Activated CD4-positive, alpha-beta T cell treated with anti-CD3 and anti-CD28 coated beads, Interleukin-2, amount 10 ng/mL, durations not matched to agents 24 days and 14 days (primary cell): ENCODE measurements at regions of chr13 and their contacts with region 1.

Region 1: GRCh38 chr13:85806553-85807175 is 7.4 kb upstream of the SLITRK6 start:
- DNase-seq: no peak
- H3K4me3 Mint-ChIP-seq: no peak overlapping the region
- H3K27ac Mint-ChIP-seq: no peak overlapping the region
- H3K4me1 Mint-ChIP-seq: no peaks in the 10 kb centered on the region
- H3K27me3 Mint-ChIP-seq: no peaks in the 10 kb centered on the region

Region 2: DNA sequence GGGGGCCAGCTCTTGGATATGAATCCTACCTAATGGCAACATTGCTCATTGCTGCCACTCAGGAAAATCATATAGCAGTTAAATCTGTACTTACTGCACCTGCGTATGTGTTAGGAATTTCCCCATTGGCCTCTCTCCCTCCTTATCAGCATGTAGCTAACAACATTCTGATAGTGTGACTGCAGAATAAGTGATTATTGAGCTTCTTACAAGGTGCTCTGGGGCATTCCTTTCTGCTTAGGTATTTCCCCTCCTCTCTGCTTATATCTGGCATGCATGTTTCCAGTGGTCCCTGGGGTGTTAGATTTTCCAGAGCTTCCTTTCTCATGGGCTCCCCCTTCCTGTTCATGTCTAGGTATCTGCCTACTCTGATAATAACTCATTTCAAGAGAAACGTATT is 1510.3 kb before region 1 on chr13:
- intact Hi-C with region 1: no loop called
- DNase-seq: no peak
- H3K4me3 Mint-ChIP-seq: no peak overlapping the region
- H3K27ac Mint-ChIP-seq: no peak overlapping the region
- H3K4me1 Mint-ChIP-seq: no peaks in the 10 kb centered on the region
- H3K27me3 Mint-ChIP-seq: no peaks in the 10 kb centered on the region

Region 3: GRCh38 chr13:84896128-84896527 is 910.5 kb before region 1 on chr13:
- intact Hi-C with region 1: loop called (anchors 1 kb)
- DNase-seq: peak; percentile 74
- H3K4me3 Mint-ChIP-seq: no peak overlapping the region
- H3K27ac Mint-ChIP-seq: no peak overlapping the region
- H3K4me1 Mint-ChIP-seq: no peaks in the 10 kb centered on the region
- H3K27me3 Mint-ChIP-seq: no peaks in the 10 kb centered on the region

Region 4: GRCh38 chr13:84917252-84917878 is 889.3 kb before region 1 on chr13:
- intact Hi-C with region 1: loop called (anchors 5 kb)
- DNase-seq: no peak
- H3K4me3 Mint-ChIP-seq: no peak overlapping the region
- H3K27ac Mint-ChIP-seq: no peak overlapping the region
- H3K4me1 Mint-ChIP-seq: no peaks in the 10 kb centered on the region
- H3K27me3 Mint-ChIP-seq: no peaks in the 10 kb centered on the region

Region 5: DNA sequence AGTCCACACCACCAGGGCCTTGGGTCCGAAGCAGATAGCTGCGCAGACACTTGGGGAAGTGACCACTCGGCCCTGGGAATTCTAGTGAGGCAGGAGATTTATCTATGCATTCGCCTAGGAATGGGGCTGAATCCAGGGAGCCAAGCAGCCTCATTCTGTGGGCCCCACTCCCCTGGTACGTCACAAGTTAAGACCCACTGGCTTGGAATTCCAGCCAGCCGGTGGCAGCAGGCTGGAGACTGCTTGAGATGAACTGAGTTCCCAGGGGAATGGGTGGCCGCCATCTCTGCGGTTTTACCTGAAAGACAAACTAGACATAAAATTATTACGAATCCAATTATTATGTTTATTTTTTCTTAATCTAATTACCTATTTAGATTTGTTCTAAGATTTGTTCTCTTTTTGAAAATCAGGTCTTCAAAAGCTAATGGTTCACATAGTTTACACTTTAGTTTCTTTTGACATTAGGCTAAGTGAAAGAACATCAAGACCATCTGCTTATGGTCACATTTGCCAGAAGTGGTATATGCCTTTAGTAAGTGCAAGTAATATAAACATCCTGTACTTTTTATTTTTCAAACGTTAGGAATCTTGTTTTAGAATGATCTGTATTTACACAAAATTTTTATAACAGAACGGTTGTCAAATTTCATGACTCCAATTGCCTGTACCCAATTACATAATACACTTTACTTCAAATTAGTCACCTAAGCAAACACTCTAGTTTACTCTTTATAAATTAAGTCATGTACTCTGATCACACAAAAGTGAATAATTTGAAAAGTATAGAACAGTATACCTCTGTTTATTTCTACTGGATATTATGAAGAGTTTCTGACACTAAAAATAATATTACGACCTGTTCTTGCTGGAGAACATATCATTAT is 81.9 kb before region 1 on chr13:
- intact Hi-C with region 1: no loop called
- DNase-seq: no peak
- H3K4me3 Mint-ChIP-seq: no peak overlapping the region
- H3K27ac Mint-ChIP-seq: no peak overlapping the region
- H3K4me1 Mint-ChIP-seq: no peaks in the 10 kb centered on the region
- H3K27me3 Mint-ChIP-seq: no peaks in the 10 kb centered on the region